ENCODE measurements at regions of chr1 and their contacts with region 1.

Region 1: GRCh38 chr1:54996359-54996868 is 2.3 kb upstream of the BSND start:
- DNase-seq: peak; percentile 88
- H3K4me3 Mint-ChIP-seq: peak overlapping the region; percentile 61
- H3K27ac Mint-ChIP-seq: peak overlapping the region; percentile 23
- H3K4me1 Mint-ChIP-seq: peaks cover 9% of the 10 kb centered on the region
- H3K27me3 Mint-ChIP-seq: peaks cover 44% of the 10 kb centered on the region
- CTCF ChIP-seq: peak; percentile 94

Region 2: DNA sequence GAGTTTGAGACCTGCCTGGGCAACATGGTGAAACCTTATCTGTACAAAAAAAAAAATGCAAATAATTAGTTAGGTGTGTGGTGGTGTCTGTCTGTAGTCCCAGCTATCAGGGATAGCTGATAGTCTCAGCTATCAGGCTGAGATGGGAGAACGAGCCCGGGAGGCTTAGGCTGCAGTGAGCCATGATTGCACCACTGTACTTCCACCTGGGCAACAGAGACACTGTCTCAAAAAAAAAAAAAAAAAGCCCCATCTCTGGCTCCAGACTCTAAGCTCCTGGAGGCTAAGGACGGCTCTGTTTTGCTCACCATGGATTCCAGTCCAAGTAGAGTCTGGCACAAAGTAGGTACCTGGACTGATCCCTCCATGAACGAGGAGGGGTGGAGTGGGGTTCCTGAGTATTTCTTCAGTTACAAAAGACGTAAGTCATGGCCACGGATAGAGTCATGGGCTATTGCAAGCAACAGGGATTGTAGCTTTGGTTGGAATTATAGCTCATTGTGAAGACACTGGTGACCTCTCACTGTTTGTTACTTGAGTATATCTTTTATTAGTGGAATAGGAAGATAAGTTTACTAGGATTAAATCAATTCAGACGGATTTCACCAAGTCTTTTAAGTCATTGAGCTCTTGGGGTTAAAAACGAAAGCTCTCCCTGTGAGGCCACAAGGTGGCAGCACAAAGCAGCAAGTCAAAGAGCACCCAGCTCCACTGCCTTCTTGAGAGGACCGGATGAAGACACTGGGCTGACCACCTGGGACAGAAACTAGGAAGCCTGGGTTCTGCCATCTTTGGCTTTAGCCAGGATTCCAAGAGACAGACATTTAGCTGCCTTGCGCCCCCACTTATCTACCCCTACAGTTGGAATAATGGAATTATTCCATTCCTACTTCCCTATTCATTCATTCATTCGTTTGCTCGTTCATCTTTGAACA is 51.5 kb before region 1 on chr1:
- CTCF ChIA-PET with region 1: interaction called, 40 read pairs
- intact Hi-C with region 1: loop called (anchors 1 kb)
- DNase-seq: peak; percentile 78
- H3K4me3 Mint-ChIP-seq: peak overlapping the region; percentile 9
- H3K27ac Mint-ChIP-seq: no peak overlapping the region
- H3K4me1 Mint-ChIP-seq: peaks cover 14% of the 10 kb centered on the region
- H3K27me3 Mint-ChIP-seq: peaks cover 16% of the 10 kb centered on the region
- CTCF ChIP-seq: peak; percentile 77

Measured in Calu3 (cell line).